Activated CD4-positive, alpha-beta T cell treated with anti-CD3 and anti-CD28 coated beads for 36 hours (primary cell): ENCODE measurements at regions of chr4 and their contacts with region 1.

Region 1: DNA sequence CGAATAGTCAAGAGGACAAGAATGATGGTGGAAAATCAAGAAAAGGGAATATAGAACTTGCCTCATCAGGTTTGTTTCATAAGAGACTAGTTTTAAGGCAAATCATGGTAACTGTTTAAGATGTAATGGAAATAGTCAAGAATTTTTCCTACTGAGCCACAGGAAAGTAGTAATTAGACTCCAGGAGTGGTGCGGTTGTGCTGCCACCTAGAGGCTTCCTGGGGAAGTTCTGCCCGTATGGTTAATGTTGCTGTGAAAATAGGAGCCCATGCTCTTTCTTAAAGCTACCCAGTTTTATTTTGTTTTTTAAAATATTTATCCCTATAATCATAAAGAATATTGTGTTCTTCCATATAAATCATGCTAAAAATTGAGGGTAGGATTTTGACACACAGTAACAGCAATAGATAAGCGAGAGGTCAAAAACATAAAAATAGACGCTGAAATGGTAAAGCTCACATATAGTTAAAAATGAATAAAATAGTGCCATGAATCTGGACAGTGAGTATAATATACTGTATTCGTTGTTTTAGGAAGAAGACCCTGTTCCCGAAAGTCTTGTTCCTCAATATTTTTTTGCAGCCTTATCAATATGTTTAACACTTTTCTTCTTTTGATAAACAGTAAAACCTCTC is 87.0 kb downstream of the PHOX2B start:
- DNase-seq: peak; percentile 66
- ATAC-seq: no peak
- H3K4me3 Mint-ChIP-seq: no peak overlapping the region
- H3K27ac Mint-ChIP-seq: no peak overlapping the region
- H3K4me1 Mint-ChIP-seq: peaks cover 6% of the 10 kb centered on the region
- H3K27me3 Mint-ChIP-seq: peaks cover 9% of the 10 kb centered on the region

Region 2: GRCh38 chr4:40976343-40976742 is 685.2 kb before region 1 on chr4:
- CTCF ChIA-PET with region 1: no interaction called
- POLR2A ChIA-PET with region 1: no interaction called
- intact Hi-C with region 1: loop called in 1 of 2 experiments (anchors 10 kb)
- DNase-seq: peak; percentile 18
- ATAC-seq: no peak
- H3K4me3 Mint-ChIP-seq: no peak overlapping the region
- H3K27ac Mint-ChIP-seq: no peak overlapping the region
- H3K4me1 Mint-ChIP-seq: no peaks in the 10 kb centered on the region
- H3K27me3 Mint-ChIP-seq: peaks cover 16% of the 10 kb centered on the region

Region 3: DNA sequence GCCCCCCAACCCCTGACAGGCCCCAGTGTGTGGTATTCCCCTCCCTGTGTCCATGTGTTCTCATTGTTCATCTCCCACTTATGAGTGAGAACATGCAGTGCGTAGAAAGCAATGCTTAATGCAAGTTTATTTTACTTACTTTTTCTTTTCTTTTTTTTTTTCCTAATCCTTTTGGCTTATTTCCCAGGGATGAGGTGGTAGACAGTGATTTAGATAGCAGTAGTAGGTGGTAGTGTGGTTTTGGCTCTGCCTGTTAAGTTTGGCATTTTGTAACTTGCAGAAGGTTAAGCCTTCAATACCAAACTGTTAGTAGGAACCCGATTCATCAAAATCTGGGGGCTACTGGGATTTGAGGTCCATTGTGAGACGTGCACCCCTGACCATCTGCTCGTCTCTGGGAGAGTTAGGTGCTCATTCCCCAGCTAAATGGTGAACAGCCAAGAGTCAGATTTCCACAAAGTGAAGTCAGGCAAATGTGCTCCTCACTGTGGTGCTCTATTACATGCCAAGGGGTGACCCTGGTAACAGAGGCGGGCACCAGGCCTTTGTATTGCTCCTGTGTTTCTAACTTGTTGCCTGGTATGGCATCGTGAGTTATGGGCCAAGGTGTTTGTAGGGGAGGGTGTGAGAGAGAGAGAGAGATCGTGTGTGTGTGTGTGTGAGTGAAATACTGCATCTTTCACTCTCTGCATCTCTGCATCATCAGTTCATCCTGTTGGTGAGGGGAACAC is 16.7 kb after region 1 on chr4:
- CTCF ChIA-PET with region 1: interaction called, 13 read pairs
- POLR2A ChIA-PET with region 1: no interaction called
- intact Hi-C with region 1: no loop called
- DNase-seq: no peak
- ATAC-seq: no peak
- H3K4me3 Mint-ChIP-seq: no peak overlapping the region
- H3K27ac Mint-ChIP-seq: no peak overlapping the region
- H3K4me1 Mint-ChIP-seq: no peaks in the 10 kb centered on the region
- H3K27me3 Mint-ChIP-seq: peaks cover 5% of the 10 kb centered on the region

Region 4: GRCh38 chr4:42268824-42269223 is 607.3 kb after region 1 on chr4:
- CTCF ChIA-PET with region 1: no interaction called
- POLR2A ChIA-PET with region 1: no interaction called
- intact Hi-C with region 1: no loop called
- DNase-seq: no peak
- ATAC-seq: no peak
- H3K4me3 Mint-ChIP-seq: no peak overlapping the region
- H3K27ac Mint-ChIP-seq: no peak overlapping the region
- H3K4me1 Mint-ChIP-seq: no peaks in the 10 kb centered on the region
- H3K27me3 Mint-ChIP-seq: peaks cover 4% of the 10 kb centered on the region